ENCODE measurements at regions of chr10 and their contacts with region 1.

Region 1: GRCh38 chr10:103038570-103038969 is 120.5 kb downstream of the CNNM2 start:
- DNase-seq: no peak
- ATAC-seq: peak in 2 of 8 donors; percentile 38 to 52
- H3K4me3 ChIP-seq: no peak overlapping the region
- H3K27ac ChIP-seq: no peak overlapping the region
- H3K4me1 ChIP-seq: peaks cover 0 to 31% (median 12%) of the 10 kb centered on the region in 9 donors
- H3K27me3 ChIP-seq: no peaks in the 10 kb centered on the region
- CTCF ChIP-seq: no peak

Region 2: DNA sequence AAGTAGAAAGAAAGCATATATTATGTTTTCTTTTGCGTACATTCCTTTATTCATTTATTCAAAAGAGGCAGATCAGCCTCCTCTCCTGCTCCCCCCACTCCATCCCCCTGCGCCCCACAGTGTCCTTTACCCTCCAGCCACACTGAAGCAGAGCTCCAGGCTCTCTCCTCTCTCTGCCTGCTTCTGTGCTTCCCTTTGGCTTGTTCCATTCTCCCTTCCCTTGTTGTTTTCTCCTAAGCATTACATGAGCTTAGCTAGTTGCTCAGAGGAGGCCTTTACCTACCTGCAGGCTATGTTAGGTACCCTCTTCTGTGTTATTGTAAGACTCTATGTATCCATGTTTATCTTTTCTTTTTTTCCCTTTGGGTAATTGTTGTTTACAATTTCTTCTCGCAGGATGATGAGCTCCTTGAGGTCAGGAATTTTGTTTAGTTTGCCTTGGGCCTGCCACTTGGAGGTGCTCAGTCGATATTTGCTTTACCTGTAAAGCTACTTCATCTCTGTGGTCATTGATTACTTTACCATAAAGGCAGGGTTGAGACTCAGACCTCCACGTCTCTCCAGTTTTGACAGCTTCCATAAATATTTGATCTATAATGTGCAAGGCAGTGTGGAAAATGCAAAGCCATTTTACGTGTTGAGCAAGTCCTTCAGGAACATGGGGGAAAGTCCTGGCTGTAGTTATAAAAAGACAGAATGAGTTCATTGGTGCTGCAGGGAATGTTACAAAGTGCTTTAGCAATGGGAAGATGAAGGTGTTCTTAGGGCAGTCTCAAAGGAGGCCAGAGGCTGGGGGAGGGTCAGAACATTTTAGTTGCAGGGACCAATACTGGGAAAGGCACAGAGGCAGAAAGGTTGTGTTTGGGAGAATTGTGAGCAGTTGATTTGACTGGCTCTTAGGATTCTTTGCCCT is 92.9 kb before region 1 on chr10:
- intact Hi-C with region 1: loop called in 1 of 10 experiments (anchors 10 kb)
- DNase-seq: no peak
- ATAC-seq: no peak
- H3K4me3 ChIP-seq: no peak overlapping the region
- H3K27ac ChIP-seq: no peak overlapping the region
- H3K4me1 ChIP-seq: peaks cover 0 to 26% (median 15%) of the 10 kb centered on the region in 9 donors
- H3K27me3 ChIP-seq: no peaks in the 10 kb centered on the region
- CTCF ChIP-seq: no peak

Measured in heart right ventricle (tissue), 16 donors.